PC-9 (cell line): ENCODE measurements at regions of chr19 and their contacts with region 1.

Region 1: GRCh38 chr19:771332-771785 is 20.4 kb downstream of the MISP start:
- DNase-seq: peak in 1 of 2 experiments; percentile 55
- H3K4me3 ChIP-seq: no peak overlapping the region
- H3K27ac ChIP-seq: no peak overlapping the region
- H3K4me1 ChIP-seq: no peaks in the 10 kb centered on the region
- H3K27me3 ChIP-seq: no peaks in the 10 kb centered on the region
- CTCF ChIP-seq: peak; percentile 60

Region 2: DNA sequence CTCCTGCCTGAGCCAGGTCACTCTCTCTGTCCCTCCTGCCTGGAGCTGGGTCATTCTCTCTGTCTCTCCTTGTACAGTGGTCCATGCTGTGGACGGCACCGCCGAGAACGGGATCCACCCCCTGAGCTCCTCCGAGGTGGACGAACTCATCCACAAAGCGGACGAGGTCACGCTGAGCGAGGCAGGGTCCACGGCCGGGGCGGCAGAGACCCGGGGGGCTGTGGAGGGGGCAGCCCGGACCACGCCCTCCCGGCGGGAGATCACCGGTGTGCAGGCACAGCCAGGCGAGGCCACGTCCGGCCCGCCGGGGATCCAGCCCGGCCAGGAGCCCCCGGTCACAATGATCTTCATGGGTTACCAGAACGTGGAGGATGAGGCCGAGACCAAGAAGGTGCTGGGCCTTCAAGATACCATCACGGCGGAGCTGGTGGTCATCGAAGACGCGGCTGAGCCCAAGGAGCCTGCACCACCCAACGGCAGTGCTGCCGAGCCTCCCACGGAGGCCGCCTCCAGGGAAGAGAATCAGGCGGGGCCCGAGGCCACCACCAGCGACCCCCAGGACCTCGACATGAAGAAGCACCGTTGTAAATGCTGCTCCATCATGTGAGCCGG is 25.0 kb before region 1 on chr19:
- CTCF ChIA-PET with region 1: interaction called, 10 read pairs
- POLR2A ChIA-PET with region 1: interaction called, 14 read pairs
- intact Hi-C with region 1: no loop called
- DNase-seq: no peak
- H3K4me3 ChIP-seq: no peak overlapping the region
- H3K27ac ChIP-seq: no peak overlapping the region
- H3K4me1 ChIP-seq: peaks cover 5% of the 10 kb centered on the region; the same call in 1 of the 2 replicates
- H3K27me3 ChIP-seq: no peaks in the 10 kb centered on the region
- CTCF ChIP-seq: no peak

Region 3: DNA sequence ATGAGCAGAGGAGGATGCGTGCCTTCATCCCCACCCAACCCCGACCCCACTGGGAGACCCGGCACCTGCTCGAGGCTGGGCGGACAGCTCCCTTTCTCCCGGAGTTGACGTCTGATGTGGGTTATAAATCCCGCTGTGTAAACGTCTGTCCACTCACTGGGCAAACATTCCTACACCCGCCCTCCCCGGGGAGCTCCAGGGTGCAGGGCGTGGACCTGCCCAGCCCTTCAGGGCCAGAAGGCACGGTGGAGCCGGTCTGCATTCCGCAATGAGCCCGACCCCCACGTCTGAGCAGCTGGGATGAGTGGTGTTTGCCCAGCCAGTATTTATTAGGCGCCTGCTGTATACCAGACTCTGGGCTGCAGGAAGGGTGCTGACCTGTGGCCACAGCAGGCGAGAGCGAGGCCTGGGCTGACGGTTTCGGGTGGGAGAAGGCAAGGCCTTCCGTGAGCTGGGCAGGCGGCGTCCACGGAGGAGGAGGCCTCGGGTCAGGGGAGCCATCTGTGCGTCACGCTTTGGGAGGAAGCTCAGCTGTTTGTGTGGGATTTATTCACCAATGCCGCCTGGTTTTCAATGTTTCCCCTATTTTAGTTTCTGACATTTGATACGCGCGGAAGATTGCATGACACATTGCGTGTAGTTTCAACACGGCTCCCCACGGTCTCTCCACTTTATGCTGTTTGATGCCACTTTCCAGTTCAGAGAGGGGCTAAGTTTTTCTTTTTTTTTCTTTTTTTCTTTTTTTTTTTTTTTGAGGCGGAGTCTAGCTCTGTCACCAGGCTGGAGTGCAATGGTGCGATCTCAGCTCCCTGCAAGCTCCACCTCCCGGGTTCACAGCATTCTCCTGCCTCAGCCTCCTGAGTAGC is 18.5 kb before region 1 on chr19:
- CTCF ChIA-PET with region 1: no interaction called
- POLR2A ChIA-PET with region 1: interaction called, 14 read pairs
- intact Hi-C with region 1: no loop called
- DNase-seq: peak; percentile 97
- H3K4me3 ChIP-seq: peak overlapping the region; percentile 48; the same call in 1 of the 2 replicates
- H3K27ac ChIP-seq: peak overlapping the region; percentile 89
- H3K4me1 ChIP-seq: peaks cover 22% of the 10 kb centered on the region
- H3K27me3 ChIP-seq: no peaks in the 10 kb centered on the region
- CTCF ChIP-seq: no peak

Region 4: DNA sequence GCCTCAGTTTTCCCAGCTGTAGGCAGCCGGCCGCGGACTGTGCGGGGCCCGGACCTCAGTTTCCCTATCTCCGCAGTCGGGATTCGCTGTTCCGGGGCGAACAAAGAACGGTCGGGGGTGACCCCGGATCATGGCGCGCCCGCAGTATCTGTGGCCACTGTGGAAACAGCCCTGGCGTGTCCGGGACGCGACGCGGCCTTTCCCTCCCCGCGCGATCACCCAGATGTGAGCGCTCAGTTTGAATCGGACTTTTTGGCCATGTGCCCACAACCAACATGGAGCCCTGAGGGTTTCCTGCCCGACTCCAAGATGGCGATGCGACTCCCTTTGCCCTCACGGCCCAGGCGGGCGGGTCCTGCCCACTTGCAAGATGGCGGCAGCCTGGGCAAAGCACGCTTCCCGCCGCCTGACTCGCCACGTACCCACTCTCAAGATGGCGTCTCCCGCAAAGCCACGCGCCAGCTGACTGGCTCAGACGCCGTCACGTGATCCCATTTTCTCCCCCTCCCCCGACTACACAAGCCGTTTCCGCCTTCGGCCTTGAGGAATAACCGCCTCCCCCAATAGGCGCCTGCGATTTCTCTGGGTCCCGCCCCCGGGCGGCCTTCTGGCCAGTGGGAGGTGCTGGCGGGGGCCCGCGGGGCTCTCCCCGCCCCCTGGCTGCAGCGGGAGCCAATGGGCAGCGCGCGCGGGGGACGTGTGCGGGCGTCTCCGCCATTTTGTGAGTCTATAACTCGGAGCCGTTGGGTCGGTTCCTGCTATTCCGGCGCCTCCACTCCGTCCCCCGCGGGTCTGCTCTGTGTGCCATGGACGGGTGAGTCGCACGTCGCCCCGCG is 25.6 kb after region 1 on chr19 and contains the start of gene PTBP1:
- CTCF ChIA-PET with region 1: no interaction called
- POLR2A ChIA-PET with region 1: no interaction called
- intact Hi-C with region 1: loop called (anchors 2 kb)
- DNase-seq: peak; percentile 98 to 99
- H3K4me3 ChIP-seq: peak within 1 kb of the TSS; percentile 78
- H3K27ac ChIP-seq: peak within 1 kb of the TSS; percentile 85
- H3K4me1 ChIP-seq: peaks cover 23% of the 10 kb centered on the region
- H3K27me3 ChIP-seq: no peaks in the 10 kb centered on the region
- CTCF ChIP-seq: no peak
- total RNA-seq, gene PTBP1: 461 and 542 TPM in 2 replicates

Region 5: GRCh38 chr19:810883-811489 is 39.6 kb after region 1 on chr19:
- CTCF ChIA-PET with region 1: no interaction called
- POLR2A ChIA-PET with region 1: no interaction called
- intact Hi-C with region 1: no loop called
- DNase-seq: no peak
- H3K4me3 ChIP-seq: no peak overlapping the region
- H3K27ac ChIP-seq: no peak overlapping the region
- H3K4me1 ChIP-seq: no peaks in the 10 kb centered on the region
- H3K27me3 ChIP-seq: no peaks in the 10 kb centered on the region
- CTCF ChIP-seq: no peak

Region 6: DNA sequence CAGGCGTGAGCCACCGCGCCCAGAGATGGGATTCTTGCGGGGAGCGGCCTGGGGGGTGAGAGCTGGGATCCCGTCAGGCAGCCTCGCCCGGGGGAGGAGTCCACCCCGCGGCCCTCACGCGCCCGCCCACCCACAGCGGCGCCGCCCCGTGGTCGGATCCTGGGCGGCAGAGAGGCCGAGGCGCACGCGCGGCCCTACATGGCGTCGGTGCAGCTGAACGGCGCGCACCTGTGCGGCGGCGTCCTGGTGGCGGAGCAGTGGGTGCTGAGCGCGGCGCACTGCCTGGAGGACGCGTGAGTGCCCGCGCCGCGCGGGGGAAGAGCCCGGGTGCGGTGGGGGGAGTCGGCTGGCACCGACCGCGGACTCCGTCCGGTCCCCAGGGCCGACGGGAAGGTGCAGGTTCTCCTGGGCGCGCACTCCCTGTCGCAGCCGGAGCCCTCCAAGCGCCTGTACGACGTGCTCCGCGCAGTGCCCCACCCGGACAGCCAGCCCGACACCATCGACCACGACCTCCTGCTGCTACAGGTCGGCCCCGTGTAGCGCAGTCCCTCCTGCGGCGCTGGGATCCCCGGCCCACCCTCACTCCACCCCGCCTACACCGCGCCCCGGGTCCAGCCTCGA is 89.2 kb after region 1 on chr19:
- CTCF ChIA-PET with region 1: interaction called, 3 read pairs
- POLR2A ChIA-PET with region 1: no interaction called
- intact Hi-C with region 1: loop called (anchors 2 kb)
- DNase-seq: peak; percentile 54 to 92
- H3K4me3 ChIP-seq: peak overlapping the region; percentile 39; the same call in 1 of the 2 replicates
- H3K27ac ChIP-seq: no peak overlapping the region
- H3K4me1 ChIP-seq: peaks cover 12% of the 10 kb centered on the region
- H3K27me3 ChIP-seq: no peaks in the 10 kb centered on the region
- CTCF ChIP-seq: no peak

Region 7: DNA sequence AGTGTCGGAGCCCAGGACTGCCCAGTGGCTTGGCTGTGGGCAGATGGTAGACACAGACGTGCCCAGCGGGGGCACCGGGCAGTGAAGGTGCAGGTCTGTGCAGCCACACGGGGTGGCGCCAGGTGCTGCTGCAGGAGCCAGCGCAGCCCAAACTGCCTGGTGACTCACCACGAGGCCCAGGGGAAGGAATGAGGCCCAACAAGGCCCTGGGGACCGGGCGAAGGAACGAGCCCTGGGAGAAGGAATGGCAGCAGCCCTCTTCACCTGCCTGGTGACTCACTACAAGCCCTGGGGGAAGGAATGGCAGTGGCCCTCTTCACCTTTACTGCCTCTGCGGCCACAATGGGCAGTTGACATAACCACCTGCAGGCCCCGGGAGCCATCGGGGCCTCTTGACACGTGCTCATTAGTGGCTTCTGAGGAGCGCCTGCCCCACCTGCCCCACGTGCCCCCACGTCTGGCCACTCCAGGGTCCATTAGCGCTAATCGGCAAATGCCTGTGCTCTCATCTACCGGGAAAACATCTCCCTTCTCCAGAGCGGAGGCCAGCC is 112.4 kb after region 1 on chr19:
- CTCF ChIA-PET with region 1: no interaction called
- POLR2A ChIA-PET with region 1: no interaction called
- intact Hi-C with region 1: loop called (anchors 1 kb)
- DNase-seq: peak; percentile 97 to 98
- H3K4me3 ChIP-seq: no peak overlapping the region
- H3K27ac ChIP-seq: no peak overlapping the region
- H3K4me1 ChIP-seq: peaks cover 14% of the 10 kb centered on the region
- H3K27me3 ChIP-seq: no peaks in the 10 kb centered on the region
- CTCF ChIP-seq: peak; percentile 74

Region 8: DNA sequence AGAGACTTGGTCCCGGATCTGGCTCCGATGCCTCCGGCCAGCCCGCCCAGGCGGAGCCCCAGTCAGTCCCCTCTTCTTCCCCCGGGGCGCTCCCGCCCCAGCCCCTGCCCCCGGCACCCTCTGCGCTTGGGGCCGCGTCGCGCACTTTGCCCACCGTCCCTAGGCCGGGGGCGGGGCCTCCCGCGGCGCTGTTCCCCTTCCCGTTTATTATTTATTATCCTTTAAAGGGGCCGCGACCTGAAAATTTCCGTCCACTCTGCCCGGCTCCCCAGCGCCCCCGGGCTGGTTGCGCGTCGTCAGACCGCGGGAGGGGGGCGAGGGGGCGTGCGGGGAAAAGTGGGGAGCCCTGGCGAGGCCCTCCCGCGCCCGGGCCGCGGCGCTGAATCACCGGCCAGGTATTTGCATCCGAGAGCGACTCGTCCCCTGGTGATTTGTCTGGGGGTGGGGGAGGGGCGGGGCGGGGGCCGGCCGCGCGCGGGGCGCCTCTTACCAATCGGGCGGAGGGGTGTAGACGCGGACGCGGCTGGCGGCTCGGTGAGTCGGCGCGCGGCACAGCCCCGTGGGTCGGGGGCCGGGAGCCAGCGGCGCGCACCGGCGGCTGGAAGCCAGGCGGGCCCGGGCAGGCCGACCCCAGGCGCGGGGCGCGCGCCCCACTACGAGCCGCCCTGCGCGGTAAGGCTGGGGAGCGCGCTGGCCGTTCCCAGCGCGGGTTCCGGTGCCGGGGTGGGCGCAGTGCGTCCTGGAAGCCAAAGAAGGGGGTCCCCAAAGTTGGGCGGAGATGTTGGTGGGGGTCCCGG is 154.4 kb after region 1 on chr19 and contains the start of gene ARID3A:
- CTCF ChIA-PET with region 1: no interaction called
- POLR2A ChIA-PET with region 1: no interaction called
- intact Hi-C with region 1: loop called (anchors 1 kb)
- DNase-seq: peak; percentile 53 to 80
- H3K4me3 ChIP-seq: peak within 1 kb of the TSS; percentile 77
- H3K27ac ChIP-seq: no peak within 1 kb of the TSS
- H3K4me1 ChIP-seq: no peaks in the 10 kb centered on the region; the same call in 1 of the 2 replicates
- H3K27me3 ChIP-seq: no peaks in the 10 kb centered on the region; the same call in 1 of the 2 replicates
- CTCF ChIP-seq: no peak
- total RNA-seq, gene ARID3A: 9.2 and 10.7 TPM in 2 replicates

Region 9: GRCh38 chr19:1315470-1316231 is 544.3 kb after region 1 on chr19:
- CTCF ChIA-PET with region 1: no interaction called
- POLR2A ChIA-PET with region 1: no interaction called
- intact Hi-C with region 1: no loop called
- DNase-seq: peak in 1 of 2 experiments; percentile 48
- H3K4me3 ChIP-seq: no peak overlapping the region
- H3K27ac ChIP-seq: no peak overlapping the region
- H3K4me1 ChIP-seq: peaks cover 14% of the 10 kb centered on the region
- H3K27me3 ChIP-seq: peaks cover 7% of the 10 kb centered on the region
- CTCF ChIP-seq: peak; percentile 56; the same call in 1 of the 2 replicates